Right ventricle myocardium inferior (tissue), 1 donor: ENCODE measurements at regions of chr15 and their contacts with region 1.

Region 1: GRCh38 chr15:96330450-96331145 is at the start of gene NR2F2:
- DNase-seq: peak; percentile 98
- ATAC-seq: peak; percentile 84
- total RNA-seq, gene NR2F2: 14.2 TPM

Region 2: GRCh38 chr15:95025924-95026728 is 1304.5 kb before region 1 on chr15:
- intact Hi-C with region 1: loop called (anchors 10 kb)
- DNase-seq: no peak
- ATAC-seq: no peak

Region 3: GRCh38 chr15:95843241-95843910 is 487.2 kb before region 1 on chr15:
- intact Hi-C with region 1: loop called (anchors 2 kb)
- DNase-seq: no peak
- ATAC-seq: peak; percentile 68

Region 4: GRCh38 chr15:96316953-96317629 is 13.5 kb before region 1 on chr15:
- intact Hi-C with region 1: no loop called
- DNase-seq: no peak
- ATAC-seq: no peak

Region 5: GRCh38 chr15:97960364-97961066 is 1629.9 kb after region 1 on chr15 and contains the start of gene ARRDC4:
- intact Hi-C with region 1: loop called (anchors 10 kb)
- DNase-seq: peak; percentile 100
- ATAC-seq: peak; percentile 99
- total RNA-seq, gene ARRDC4: 15.9 TPM